PC-9 (cell line): ENCODE measurements at regions of chr7 and their contacts with region 1.

Region 1: GRCh38 chr7:50793115-50793946 is 10.6 kb upstream of the GRB10 start:
- DNase-seq: peak in 1 of 2 experiments; percentile 72
- H3K4me3 ChIP-seq: peak overlapping the region; percentile 73; the same call in 1 of the 2 replicates
- H3K27ac ChIP-seq: no peak overlapping the region
- H3K4me1 ChIP-seq: peaks cover 24% of the 10 kb centered on the region
- H3K27me3 ChIP-seq: no peaks in the 10 kb centered on the region
- CTCF ChIP-seq: no peak

Region 2: DNA sequence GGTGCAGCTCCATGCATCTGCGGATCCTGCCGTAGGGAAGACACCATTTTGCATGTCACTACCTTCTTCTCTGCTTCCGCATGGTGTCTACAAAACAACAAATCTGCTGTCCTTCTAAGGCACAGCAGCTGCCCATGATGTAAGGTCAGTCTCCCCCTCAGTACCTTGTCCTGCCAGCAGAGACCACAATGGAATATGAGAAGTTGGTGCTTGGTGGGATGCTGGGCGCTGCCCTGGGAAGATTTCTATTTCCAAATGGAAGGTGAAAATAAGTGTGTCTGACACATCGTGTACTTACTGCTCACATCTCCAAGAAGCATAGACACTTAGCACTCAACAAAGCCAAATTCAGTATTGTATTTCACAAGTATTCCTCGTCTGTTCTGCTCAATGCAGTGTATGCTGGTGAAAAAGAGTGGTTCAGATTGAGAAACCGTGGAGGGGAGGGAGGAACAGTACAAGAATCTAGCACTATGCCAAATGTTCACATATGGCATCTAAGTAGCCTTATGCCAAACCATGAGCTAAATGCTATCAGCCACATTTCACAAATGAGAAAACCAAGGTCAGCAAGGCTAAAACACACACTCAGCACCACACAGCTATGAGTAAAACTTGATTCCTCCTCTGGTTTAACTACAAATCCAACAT is 105.6 kb before region 1 on chr7:
- CTCF ChIA-PET with region 1: no interaction called
- POLR2A ChIA-PET with region 1: no interaction called
- intact Hi-C with region 1: loop called (anchors 2 kb)
- DNase-seq: no peak
- H3K4me3 ChIP-seq: no peak overlapping the region
- H3K27ac ChIP-seq: no peak overlapping the region
- H3K4me1 ChIP-seq: peaks cover 22% of the 10 kb centered on the region
- H3K27me3 ChIP-seq: no peaks in the 10 kb centered on the region
- CTCF ChIP-seq: no peak

Region 3: DNA sequence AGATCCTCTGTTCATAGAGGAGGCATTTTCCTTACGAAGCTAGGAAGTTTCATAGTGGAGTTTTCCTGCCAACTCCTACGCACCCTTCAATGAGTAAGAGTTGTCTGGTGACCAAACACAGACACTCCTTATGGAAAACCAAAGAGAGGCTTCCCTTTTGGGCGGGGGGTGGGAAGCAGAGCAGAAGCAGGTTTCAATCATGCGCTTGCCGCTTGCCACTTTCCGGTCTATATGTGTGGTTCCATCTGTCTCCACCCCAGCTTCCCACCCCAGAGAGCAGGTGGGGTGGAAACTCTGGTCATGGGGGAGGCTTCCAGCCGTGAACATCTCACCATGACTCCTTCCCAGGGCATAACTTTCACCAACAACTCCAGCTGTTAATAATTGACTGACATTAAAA is 58.1 kb after region 1 on chr7:
- CTCF ChIA-PET with region 1: no interaction called
- POLR2A ChIA-PET with region 1: no interaction called
- intact Hi-C with region 1: no loop called
- DNase-seq: no peak
- H3K4me3 ChIP-seq: no peak overlapping the region
- H3K27ac ChIP-seq: no peak overlapping the region
- H3K4me1 ChIP-seq: peaks cover 10% of the 10 kb centered on the region
- H3K27me3 ChIP-seq: peaks cover 7% of the 10 kb centered on the region; the same call in 1 of the 2 replicates
- CTCF ChIP-seq: no peak

Region 4: GRCh38 chr7:50953820-50954219 is 160.5 kb after region 1 on chr7:
- CTCF ChIA-PET with region 1: no interaction called
- POLR2A ChIA-PET with region 1: no interaction called
- intact Hi-C with region 1: loop called (anchors 5 kb)
- DNase-seq: peak; percentile 80 to 97
- H3K4me3 ChIP-seq: no peak overlapping the region
- H3K27ac ChIP-seq: peak overlapping the region; percentile 87
- H3K4me1 ChIP-seq: peaks cover 47% of the 10 kb centered on the region
- H3K27me3 ChIP-seq: no peaks in the 10 kb centered on the region
- CTCF ChIP-seq: no peak

Region 5: GRCh38 chr7:51045319-51046102 is 252.2 kb after region 1 on chr7:
- CTCF ChIA-PET with region 1: no interaction called
- POLR2A ChIA-PET with region 1: no interaction called
- intact Hi-C with region 1: loop called (anchors 5 kb)
- DNase-seq: peak; percentile 90 to 100
- H3K4me3 ChIP-seq: no peak overlapping the region
- H3K27ac ChIP-seq: peak overlapping the region; percentile 59
- H3K4me1 ChIP-seq: peaks cover 28% of the 10 kb centered on the region
- H3K27me3 ChIP-seq: no peaks in the 10 kb centered on the region
- CTCF ChIP-seq: no peak

Region 6: GRCh38 chr7:51141451-51142003 is 348.2 kb after region 1 on chr7:
- CTCF ChIA-PET with region 1: no interaction called
- POLR2A ChIA-PET with region 1: no interaction called
- intact Hi-C with region 1: loop called (anchors 2 kb)
- DNase-seq: peak in 1 of 2 experiments; percentile 17
- H3K4me3 ChIP-seq: no peak overlapping the region
- H3K27ac ChIP-seq: no peak overlapping the region
- H3K4me1 ChIP-seq: peaks cover 11% of the 10 kb centered on the region
- H3K27me3 ChIP-seq: no peaks in the 10 kb centered on the region
- CTCF ChIP-seq: peak; percentile 89